Sciatic nerve (tissue), 2 donors: ENCODE measurements at regions of chr9 and their contacts with region 1.

Region 1: GRCh38 chr9:129849901-129850300 is 14.6 kb downstream of the USP20 start:
- DNase-seq: no peak
- ATAC-seq: no peak

Region 2: GRCh38 chr9:129237195-129237611 is 612.7 kb before region 1 on chr9:
- intact Hi-C with region 1: no loop called
- DNase-seq: no peak
- ATAC-seq: no peak

Region 3: DNA sequence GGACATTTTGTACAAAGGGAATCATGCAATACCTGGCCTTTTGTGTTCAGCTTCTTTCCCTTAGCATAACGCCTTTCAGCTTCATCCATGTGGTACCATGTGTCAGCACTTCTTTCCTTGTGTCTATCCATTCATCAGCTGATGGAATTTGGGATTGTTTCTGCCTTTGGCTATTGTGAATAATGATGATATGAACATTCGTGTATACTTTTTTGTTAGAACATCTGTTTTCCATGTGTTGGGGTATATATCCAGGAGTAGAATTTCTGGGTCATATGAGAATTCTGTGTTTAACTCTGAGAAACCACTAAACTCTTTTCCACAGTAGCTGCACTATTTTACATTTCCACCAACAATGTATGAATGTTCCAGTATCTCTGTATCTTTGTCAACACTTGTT is 1529.2 kb after region 1 on chr9:
- intact Hi-C with region 1: loop called (anchors 5 kb)
- DNase-seq: no peak
- ATAC-seq: no peak